Left ventricle myocardium inferior (tissue), 1 donor: ENCODE measurements at regions of chr9 and their contacts with region 1.

Region 1: GRCh38 chr9:134413890-134414731 is 87.9 kb downstream of the RXRA start:
- DNase-seq: peak; percentile 74
- H3K4me3 ChIP-seq: no peak overlapping the region
- H3K27ac ChIP-seq: peak overlapping the region; percentile 92
- H3K4me1 ChIP-seq: peaks cover 94% of the 10 kb centered on the region
- H3K27me3 ChIP-seq: no peaks in the 10 kb centered on the region
- CTCF ChIP-seq: no peak

Region 2: DNA sequence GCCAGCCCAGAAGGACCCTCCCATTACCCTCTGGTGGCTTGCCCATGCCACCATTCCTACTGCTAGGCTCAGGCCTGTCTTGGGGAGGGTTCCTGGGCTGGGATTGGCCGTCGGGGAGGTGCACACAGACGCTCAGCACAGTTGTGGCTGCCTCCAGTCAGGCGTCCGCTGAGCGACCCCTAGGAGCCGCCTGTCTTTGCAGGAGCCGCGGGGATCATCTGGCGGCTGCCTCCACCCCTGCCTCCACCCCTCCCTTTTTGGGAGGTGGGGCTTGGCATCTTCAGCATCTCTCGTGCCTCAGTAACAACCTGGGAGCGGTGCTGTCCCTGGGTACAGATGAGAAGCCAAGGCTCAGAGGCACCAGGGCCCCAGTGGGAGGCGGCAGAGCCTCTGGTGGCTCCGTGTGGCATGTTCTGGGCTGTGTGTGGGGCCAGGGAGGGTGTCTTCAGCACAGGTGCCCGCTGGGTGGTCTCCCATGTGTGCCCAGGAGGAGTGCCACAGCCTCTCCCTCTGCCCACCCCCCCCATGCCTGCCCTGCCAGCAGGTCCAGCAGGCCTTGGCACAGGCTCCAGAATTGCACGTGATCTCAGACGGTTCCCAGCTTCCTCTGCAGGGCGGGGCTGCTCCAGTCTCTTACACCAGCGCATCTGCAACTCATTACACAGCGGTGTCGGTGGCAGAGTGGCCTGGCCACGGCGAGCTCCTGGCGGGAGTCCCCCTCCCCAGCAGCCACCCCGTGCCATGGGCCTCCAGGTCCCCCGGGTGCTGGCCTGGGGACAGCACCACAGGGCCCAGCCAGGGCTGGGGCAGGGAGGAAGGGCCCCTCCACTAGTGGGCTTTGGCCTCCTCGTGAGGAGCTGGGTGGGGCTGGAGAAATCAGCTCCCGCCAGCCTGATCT is 48.1 kb before region 1 on chr9:
- intact Hi-C with region 1: loop called (anchors 10 kb)
- DNase-seq: peak; percentile 92
- H3K4me3 ChIP-seq: peak overlapping the region; percentile 47
- H3K27ac ChIP-seq: peak overlapping the region; percentile 90
- H3K4me1 ChIP-seq: peaks cover 92% of the 10 kb centered on the region
- H3K27me3 ChIP-seq: no peaks in the 10 kb centered on the region
- CTCF ChIP-seq: peak; percentile 33